HCT116 (cell line): ENCODE measurements at regions of chr5 and their contacts with region 1.

Region 1: DNA sequence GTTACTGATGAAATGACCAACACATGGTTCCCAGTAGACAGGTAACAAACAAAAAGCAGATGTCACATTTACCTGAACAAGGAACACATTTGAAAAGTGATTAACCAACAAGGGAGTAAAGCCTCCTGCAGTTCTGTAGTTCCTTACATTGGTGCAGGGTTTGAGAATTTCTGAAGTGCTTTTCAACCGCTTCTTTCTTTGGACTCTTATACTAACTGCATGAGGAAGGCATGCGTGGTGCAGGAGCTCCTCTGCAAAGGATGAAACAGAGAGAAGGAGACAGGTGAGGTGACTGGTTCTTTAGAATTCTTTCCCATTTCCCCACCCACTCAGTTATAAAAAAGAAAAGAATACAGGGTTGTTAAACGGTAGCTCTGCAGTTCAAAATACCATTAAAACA is 4.6 kb upstream of the IL9 start:
- DNase-seq: no peak
- ATAC-seq: no peak
- H3K4me3 ChIP-seq: no peak overlapping the region
- H3K27ac ChIP-seq: no peak overlapping the region
- H3K4me1 ChIP-seq: no peaks in the 10 kb centered on the region
- H3K27me3 ChIP-seq: peaks cover 71% of the 10 kb centered on the region
- CTCF ChIP-seq: no peak
- POLR2A ChIP-seq: no peak
- RAD21 ChIP-seq: no peak

Region 2: DNA sequence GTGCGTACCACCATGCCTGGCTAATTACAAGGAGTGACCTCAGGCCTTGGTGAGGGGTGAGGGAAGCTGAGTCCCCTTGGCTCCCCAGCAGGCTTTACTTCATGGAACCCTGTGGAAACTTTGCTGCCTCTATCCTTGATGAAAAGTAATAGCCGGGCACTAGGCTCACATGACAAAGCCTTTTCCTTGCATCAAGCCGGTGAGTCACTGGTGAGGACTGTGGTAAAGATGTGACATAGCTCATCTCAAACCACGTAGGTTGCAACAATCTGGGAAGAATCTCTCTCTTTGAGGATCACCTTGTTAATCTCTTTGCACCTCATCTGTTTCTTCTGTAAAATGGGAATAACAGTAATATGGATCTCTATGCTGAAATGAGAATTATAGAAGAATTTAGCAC is 182.1 kb before region 1 on chr5:
- CTCF ChIA-PET with region 1: no interaction called
- POLR2A ChIA-PET with region 1: no interaction called
- RAD21 ChIA-PET with region 1: no interaction called
- intact Hi-C with region 1: no loop called
- DNase-seq: peak; percentile 8
- ATAC-seq: peak; percentile 66; the same call in 1 of the 2 replicates
- H3K4me3 ChIP-seq: no peak overlapping the region
- H3K27ac ChIP-seq: no peak overlapping the region
- H3K4me1 ChIP-seq: peaks cover 6 to 14% of the 10 kb centered on the region in 2 experiments; a peak in 3 of 4 replicates
- H3K27me3 ChIP-seq: 0 out of 2 replicates have a peak, but pooled peaks cover 2% of the 10 kb centered on the region
- CTCF ChIP-seq: no peak
- POLR2A ChIP-seq: no peak
- RAD21 ChIP-seq: no peak

Region 3: GRCh38 chr5:135934939-135935338 is 34.7 kb after region 1 on chr5:
- CTCF ChIA-PET with region 1: no interaction called
- POLR2A ChIA-PET with region 1: no interaction called
- RAD21 ChIA-PET with region 1: no interaction called
- intact Hi-C with region 1: loop called (anchors 5 kb)
- DNase-seq: no peak
- ATAC-seq: no peak
- H3K4me3 ChIP-seq: no peak overlapping the region
- H3K27ac ChIP-seq: no peak overlapping the region
- H3K4me1 ChIP-seq: no peaks in the 10 kb centered on the region
- H3K27me3 ChIP-seq: peaks cover 61% of the 10 kb centered on the region
- CTCF ChIP-seq: no peak
- POLR2A ChIP-seq: no peak
- RAD21 ChIP-seq: no peak

Region 4: DNA sequence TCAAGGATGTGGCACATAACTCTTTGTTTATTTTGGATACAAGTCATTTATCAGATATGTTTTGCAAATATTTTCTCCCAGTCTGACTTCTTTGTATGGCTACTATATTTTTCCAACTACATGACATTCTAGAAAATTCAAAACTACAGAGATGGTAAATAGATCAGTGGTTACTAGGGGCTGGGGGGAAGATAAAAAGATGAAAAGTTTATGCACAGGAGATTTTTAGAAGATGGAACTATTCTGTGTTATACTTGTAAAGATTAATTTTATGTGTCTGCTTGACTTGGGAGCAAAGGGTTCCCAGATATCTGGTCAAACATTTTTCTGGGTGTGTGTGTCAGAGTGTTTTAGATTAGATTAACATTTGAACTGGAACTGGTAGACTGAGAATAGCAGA is 812.4 kb after region 1 on chr5:
- CTCF ChIA-PET with region 1: no interaction called
- POLR2A ChIA-PET with region 1: no interaction called
- RAD21 ChIA-PET with region 1: no interaction called
- intact Hi-C with region 1: no loop called
- DNase-seq: no peak
- ATAC-seq: no peak
- H3K4me3 ChIP-seq: no peak overlapping the region
- H3K27ac ChIP-seq: no peak overlapping the region
- H3K4me1 ChIP-seq: no peaks in the 10 kb centered on the region
- H3K27me3 ChIP-seq: no peaks in the 10 kb centered on the region; the same call in 1 of the 2 replicates
- CTCF ChIP-seq: no peak
- POLR2A ChIP-seq: no peak
- RAD21 ChIP-seq: no peak